Activated CD8-positive, alpha-beta T cell treated with anti-CD3 and anti-CD28 coated beads for 36 hours (primary cell): ENCODE measurements at regions of chr11 and their contacts with region 1.

Region 1: DNA sequence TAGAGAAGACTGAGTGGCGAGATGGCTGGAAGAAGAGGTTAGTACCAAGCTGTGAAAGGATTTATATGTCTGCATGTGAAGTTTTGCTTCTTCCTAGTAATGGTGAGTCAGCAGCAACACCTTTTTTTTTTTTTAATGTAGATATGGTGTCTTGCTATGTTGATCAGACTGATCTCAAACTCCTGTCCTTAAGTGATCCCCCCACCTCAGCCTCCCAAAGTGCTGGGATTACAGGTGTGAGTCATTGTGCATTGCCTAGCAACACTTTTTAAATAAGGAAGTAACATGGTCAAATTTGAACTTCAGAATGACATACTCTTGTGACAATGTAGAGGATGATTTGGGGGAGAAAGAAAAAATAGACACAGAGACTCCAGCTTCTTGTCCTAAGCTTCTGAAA is 6.5 kb upstream of the CSTPP1 start:
- DNase-seq: peak; percentile 49
- ATAC-seq: peak; percentile 92
- H3K4me3 Mint-ChIP-seq: no peak overlapping the region
- H3K27ac Mint-ChIP-seq: no peak overlapping the region
- H3K4me1 Mint-ChIP-seq: peaks cover 8% of the 10 kb centered on the region
- H3K27me3 Mint-ChIP-seq: peaks cover 9% of the 10 kb centered on the region
- CTCF ChIP-seq: no peak

Region 2: GRCh38 chr11:46886215-46886614 is 43.9 kb before region 1 on chr11:
- CTCF ChIA-PET with region 1: no interaction called
- POLR2A ChIA-PET with region 1: no interaction called
- intact Hi-C with region 1: no loop called
- DNase-seq: no peak
- ATAC-seq: no peak
- H3K4me3 Mint-ChIP-seq: no peak overlapping the region
- H3K27ac Mint-ChIP-seq: no peak overlapping the region
- H3K4me1 Mint-ChIP-seq: no peaks in the 10 kb centered on the region
- H3K27me3 Mint-ChIP-seq: peaks cover 3% of the 10 kb centered on the region
- CTCF ChIP-seq: no peak

Region 3: GRCh38 chr11:46942178-46942577 is 12.1 kb after region 1 on chr11:
- CTCF ChIA-PET with region 1: interaction called, 10 read pairs
- POLR2A ChIA-PET with region 1: no interaction called
- intact Hi-C with region 1: no loop called
- DNase-seq: no peak
- ATAC-seq: no peak
- H3K4me3 Mint-ChIP-seq: no peak overlapping the region
- H3K27ac Mint-ChIP-seq: no peak overlapping the region
- H3K4me1 Mint-ChIP-seq: peaks cover 9% of the 10 kb centered on the region
- H3K27me3 Mint-ChIP-seq: no peaks in the 10 kb centered on the region
- CTCF ChIP-seq: no peak